ENCODE measurements at regions of chr12 and their contacts with region 1.

Region 1: DNA sequence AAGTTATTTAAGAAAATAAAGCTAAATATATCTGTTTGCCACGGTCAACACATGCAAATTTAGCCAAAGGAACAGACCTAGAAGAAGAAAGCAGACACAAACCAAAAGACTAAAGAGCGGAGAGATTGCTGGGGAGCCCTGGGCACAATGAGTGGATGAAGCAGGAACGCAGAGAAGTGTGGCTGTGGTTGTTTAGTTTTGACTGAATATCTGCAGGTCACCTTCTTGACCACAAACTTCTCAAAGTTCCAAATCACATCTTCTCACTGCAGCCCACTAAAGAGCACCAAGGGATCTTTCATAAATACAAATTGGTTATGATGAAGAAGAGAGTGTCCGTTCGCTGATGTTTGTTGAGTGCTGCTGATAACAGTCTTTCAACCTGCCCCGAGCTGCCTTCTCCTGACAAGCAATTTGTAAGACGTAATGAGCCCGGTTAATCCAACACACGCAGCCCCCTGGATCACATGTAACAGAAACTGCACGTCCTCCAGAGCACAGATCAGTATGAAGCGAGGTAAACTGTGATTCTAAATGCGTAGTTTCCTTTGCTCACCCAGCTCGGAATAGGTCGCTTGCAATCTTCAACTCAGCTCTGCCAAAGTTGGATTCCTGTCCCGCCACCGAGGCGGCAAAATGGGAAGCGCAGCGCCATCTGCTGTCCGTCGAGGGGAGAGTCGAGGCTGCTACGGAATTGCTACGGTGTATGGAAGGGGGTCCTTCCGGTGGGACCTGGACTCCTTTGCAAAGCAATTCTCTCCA is 120.8 kb downstream of the GXYLT1 start:
- DNase-seq: peak; percentile 88
- H3K4me3 ChIP-seq: peak overlapping the region; percentile 58
- H3K27ac ChIP-seq: no peak overlapping the region
- H3K4me1 ChIP-seq: peaks cover 49% of the 10 kb centered on the region
- CTCF ChIP-seq: peak; percentile 98

Region 2: DNA sequence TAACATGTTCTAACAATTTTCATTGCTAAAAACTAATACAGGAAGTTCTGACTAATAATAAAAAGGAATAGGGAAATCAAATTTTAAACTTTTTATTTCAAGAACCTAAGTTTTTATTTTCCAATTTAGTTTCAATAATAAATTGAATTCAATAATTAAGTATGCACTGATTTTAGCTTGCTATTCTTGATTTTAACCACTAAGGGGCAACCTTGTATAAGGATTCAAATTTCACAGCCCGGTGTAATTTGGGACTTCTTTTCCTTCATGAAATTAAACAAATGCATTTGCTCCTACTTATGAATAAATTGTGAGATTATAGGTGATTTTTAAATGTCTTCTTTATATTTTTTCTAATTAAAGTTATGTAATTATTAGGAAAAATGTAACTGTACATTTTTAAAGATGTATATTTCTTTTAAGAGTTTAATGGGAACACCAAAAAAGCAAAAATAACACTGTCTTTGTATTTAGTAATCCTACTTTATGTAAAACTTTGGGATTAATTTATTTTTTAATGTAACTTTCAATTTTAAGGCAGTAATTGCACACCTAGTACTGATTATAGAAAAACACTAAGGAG is 1077.2 kb before region 1 on chr12:
- CTCF ChIA-PET with region 1: no interaction called
- POLR2A ChIA-PET with region 1: no interaction called
- intact Hi-C with region 1: loop called (anchors 5 kb)
- DNase-seq: peak; percentile 27
- H3K4me3 ChIP-seq: no peak overlapping the region
- H3K27ac ChIP-seq: no peak overlapping the region
- H3K4me1 ChIP-seq: no peaks in the 10 kb centered on the region
- CTCF ChIP-seq: peak; percentile 90

Region 3: GRCh38 chr12:41277116-41277945 is 746.6 kb before region 1 on chr12:
- CTCF ChIA-PET with region 1: no interaction called
- POLR2A ChIA-PET with region 1: interaction called, 5 read pairs
- intact Hi-C with region 1: loop called (anchors 1 kb)
- DNase-seq: peak; percentile 70
- H3K4me3 ChIP-seq: no peak overlapping the region
- H3K27ac ChIP-seq: no peak overlapping the region
- H3K4me1 ChIP-seq: no peaks in the 10 kb centered on the region
- CTCF ChIP-seq: peak; percentile 91

Region 4: GRCh38 chr12:41367726-41368405 is 656.0 kb before region 1 on chr12:
- CTCF ChIA-PET with region 1: no interaction called
- POLR2A ChIA-PET with region 1: no interaction called
- intact Hi-C with region 1: loop called (anchors 2 kb)
- DNase-seq: peak; percentile 54
- H3K4me3 ChIP-seq: no peak overlapping the region
- H3K27ac ChIP-seq: no peak overlapping the region
- H3K4me1 ChIP-seq: no peaks in the 10 kb centered on the region
- CTCF ChIP-seq: peak; percentile 86

Region 5: GRCh38 chr12:41919526-41920261 is 104.2 kb before region 1 on chr12:
- CTCF ChIA-PET with region 1: no interaction called
- POLR2A ChIA-PET with region 1: no interaction called
- intact Hi-C with region 1: loop called (anchors 5 kb)
- DNase-seq: no peak
- H3K4me3 ChIP-seq: no peak overlapping the region
- H3K27ac ChIP-seq: no peak overlapping the region
- H3K4me1 ChIP-seq: peaks cover 7% of the 10 kb centered on the region
- CTCF ChIP-seq: no peak

Region 6: DNA sequence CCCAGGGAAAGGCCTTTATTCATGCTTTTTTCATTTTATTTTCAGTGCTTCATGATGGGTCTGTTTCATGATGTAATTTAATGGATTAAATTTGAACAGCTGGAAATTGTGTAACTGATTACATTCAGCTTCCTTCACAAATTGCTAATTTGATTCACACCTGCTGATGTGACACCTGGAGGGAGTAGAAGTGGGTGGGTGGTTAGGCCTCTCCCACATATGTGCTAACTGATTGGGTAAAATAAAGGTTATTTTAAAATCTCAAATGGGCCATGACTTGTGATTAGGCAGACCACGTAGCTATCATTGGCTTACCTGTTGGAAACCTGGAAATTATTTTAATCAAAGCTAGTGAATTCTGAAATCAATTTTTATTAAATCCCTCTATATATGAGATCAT is 21.4 kb before region 1 on chr12:
- CTCF ChIA-PET with region 1: no interaction called
- POLR2A ChIA-PET with region 1: no interaction called
- intact Hi-C with region 1: no loop called
- DNase-seq: no peak
- H3K4me3 ChIP-seq: no peak overlapping the region
- H3K27ac ChIP-seq: no peak overlapping the region
- H3K4me1 ChIP-seq: no peaks in the 10 kb centered on the region
- CTCF ChIP-seq: no peak

Region 7: GRCh38 chr12:42332301-42333285 is 308.7 kb after region 1 on chr12:
- CTCF ChIA-PET with region 1: no interaction called
- POLR2A ChIA-PET with region 1: no interaction called
- intact Hi-C with region 1: loop called (anchors 2 kb)
- DNase-seq: peak; percentile 58
- H3K4me3 ChIP-seq: no peak overlapping the region
- H3K27ac ChIP-seq: no peak overlapping the region
- H3K4me1 ChIP-seq: peaks cover 40% of the 10 kb centered on the region
- CTCF ChIP-seq: peak; percentile 88

Measured in OCI-LY7 (cell line).